Esophagus muscularis mucosa (tissue), 4 donors: ENCODE measurements at regions of chr14 and their contacts with region 1.

Region 1: DNA sequence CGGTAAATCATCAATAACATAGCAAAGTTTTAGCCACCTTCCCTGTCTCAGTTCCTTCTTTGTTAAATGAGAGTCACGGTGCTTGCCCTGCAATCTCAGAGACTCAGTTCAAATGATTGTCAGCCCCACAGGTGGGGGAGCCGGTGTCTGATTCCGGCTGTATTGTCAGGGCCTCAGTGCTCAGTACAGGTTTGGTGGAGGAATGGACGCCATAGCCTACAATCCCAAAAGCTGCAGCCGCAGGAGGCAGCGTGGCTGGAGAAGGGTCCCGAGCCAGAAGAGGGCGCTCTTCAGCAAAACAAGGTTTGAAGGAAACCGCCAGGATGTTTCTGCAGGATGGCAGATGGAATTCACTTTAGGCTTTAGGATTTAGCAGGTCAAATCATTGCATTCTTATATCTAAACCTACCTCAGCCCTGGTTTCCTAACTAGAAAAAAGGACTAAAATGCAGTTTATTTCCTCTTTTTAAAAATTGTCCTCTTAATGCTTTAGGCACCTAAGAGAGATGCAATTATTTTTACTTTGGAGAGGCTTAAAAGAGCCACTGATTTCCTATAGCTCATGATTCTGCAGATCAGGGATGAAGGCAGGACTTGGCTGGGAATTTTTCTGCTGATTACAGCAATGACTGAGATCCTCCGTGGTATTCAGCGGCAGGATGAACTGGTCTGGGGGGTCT is 29.2 kb downstream of the FOS start:
- DNase-seq: no peak
- H3K4me3 ChIP-seq: no peak overlapping the region
- H3K27ac ChIP-seq: no peak overlapping the region
- H3K4me1 ChIP-seq: peaks cover 25 to 35% (median 33%) of the 10 kb centered on the region in 4 donors
- H3K27me3 ChIP-seq: no peaks in the 10 kb centered on the region
- CTCF ChIP-seq: peak; percentile 92 to 94 (median 93)
- EP300 ChIP-seq: no peak
- POLR2A ChIP-seq: no peak

Region 2: GRCh38 chr14:75427482-75428229 is 119.8 kb after region 1 on chr14 and contains the start of gene JDP2:
- intact Hi-C with region 1: loop called (anchors 1 kb)
- DNase-seq: peak; percentile 96
- H3K4me3 ChIP-seq: peak within 1 kb of the TSS; percentile 79 to 87 (median 83)
- H3K27ac ChIP-seq: peak within 1 kb of the TSS; percentile 89 to 96 (median 95)
- H3K4me1 ChIP-seq: peaks cover 41 to 63% (median 53%) of the 10 kb centered on the region in 4 donors
- H3K27me3 ChIP-seq: no peaks in the 10 kb centered on the region
- CTCF ChIP-seq: peak in 2 of 3 experiments; percentile 10 to 46
- EP300 ChIP-seq: no peak
- POLR2A ChIP-seq: peak; percentile 57
- total RNA-seq, gene JDP2: 50.5 to 94.5 (median 78.3) TPM

Region 3: DNA sequence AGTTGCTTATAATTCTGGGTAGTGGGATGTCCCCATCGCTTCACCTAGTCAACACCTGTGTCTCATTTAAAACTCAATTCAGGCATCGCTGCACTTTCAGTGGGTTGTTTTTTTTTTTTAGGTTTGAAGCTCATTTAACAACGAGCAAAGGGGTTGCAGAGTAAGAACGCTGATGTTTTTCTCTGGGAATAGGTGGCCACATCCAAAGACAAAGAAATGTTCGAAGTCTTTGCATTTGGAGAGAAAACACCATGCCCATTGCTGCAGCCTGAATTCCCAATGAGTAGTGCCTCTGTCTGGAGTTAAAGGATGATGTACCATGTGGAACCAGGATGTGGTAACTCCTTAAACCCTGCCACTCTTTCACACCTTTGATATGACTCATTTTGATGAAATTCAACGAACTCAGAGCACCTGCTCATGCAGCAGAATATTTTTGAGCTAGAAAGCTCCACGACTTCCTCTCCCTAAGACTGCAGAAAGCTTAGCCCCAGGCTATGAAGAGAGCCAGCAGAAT is 179.4 kb after region 1 on chr14:
- intact Hi-C with region 1: loop called (anchors 1 kb)
- DNase-seq: peak; percentile 53
- H3K4me3 ChIP-seq: no peak overlapping the region
- H3K27ac ChIP-seq: no peak overlapping the region
- H3K4me1 ChIP-seq: peaks cover 0 to 7% (median 0%) of the 10 kb centered on the region in 4 donors
- H3K27me3 ChIP-seq: no peaks in the 10 kb centered on the region
- CTCF ChIP-seq: no peak
- EP300 ChIP-seq: no peak
- POLR2A ChIP-seq: no peak